Calu3 (cell line): ENCODE measurements at regions of chr16 and their contacts with region 1.

Region 1: GRCh38 chr16:30091474-30092372 is at the start of gene TBX6:
- DNase-seq: peak; percentile 98
- H3K4me3 Mint-ChIP-seq: peak within 1 kb of the TSS; percentile 85
- H3K27ac Mint-ChIP-seq: peak within 1 kb of the TSS; percentile 94
- H3K4me1 Mint-ChIP-seq: peaks cover 59% of the 10 kb centered on the region
- H3K27me3 Mint-ChIP-seq: no peaks in the 10 kb centered on the region
- CTCF ChIP-seq: peak; percentile 93
- total RNA-seq, gene TBX6: 3.6 and 4.7 TPM in 2 replicates

Region 2: GRCh38 chr16:30065143-30065850 is 26.4 kb before region 1 on chr16 and contains the start of gene ALDOA:
- CTCF ChIA-PET with region 1: interaction called, 20 read pairs
- intact Hi-C with region 1: no loop called
- DNase-seq: peak; percentile 100
- H3K4me3 Mint-ChIP-seq: peak within 1 kb of the TSS; percentile 83
- H3K27ac Mint-ChIP-seq: peak within 1 kb of the TSS; percentile 87
- H3K4me1 Mint-ChIP-seq: peaks cover 47% of the 10 kb centered on the region
- H3K27me3 Mint-ChIP-seq: no peaks in the 10 kb centered on the region
- CTCF ChIP-seq: no peak
- total RNA-seq, gene ALDOA: 1,549 and 1,562 TPM in 2 replicates

Region 3: GRCh38 chr16:30104494-30104968 is 12.8 kb after region 1 on chr16:
- CTCF ChIA-PET with region 1: interaction called, 10 read pairs
- intact Hi-C with region 1: no loop called
- DNase-seq: peak; percentile 85
- H3K4me3 Mint-ChIP-seq: peak overlapping the region; percentile 35
- H3K27ac Mint-ChIP-seq: peak overlapping the region; percentile 52
- H3K4me1 Mint-ChIP-seq: peaks cover 19% of the 10 kb centered on the region
- H3K27me3 Mint-ChIP-seq: no peaks in the 10 kb centered on the region
- CTCF ChIP-seq: no peak

Region 4: DNA sequence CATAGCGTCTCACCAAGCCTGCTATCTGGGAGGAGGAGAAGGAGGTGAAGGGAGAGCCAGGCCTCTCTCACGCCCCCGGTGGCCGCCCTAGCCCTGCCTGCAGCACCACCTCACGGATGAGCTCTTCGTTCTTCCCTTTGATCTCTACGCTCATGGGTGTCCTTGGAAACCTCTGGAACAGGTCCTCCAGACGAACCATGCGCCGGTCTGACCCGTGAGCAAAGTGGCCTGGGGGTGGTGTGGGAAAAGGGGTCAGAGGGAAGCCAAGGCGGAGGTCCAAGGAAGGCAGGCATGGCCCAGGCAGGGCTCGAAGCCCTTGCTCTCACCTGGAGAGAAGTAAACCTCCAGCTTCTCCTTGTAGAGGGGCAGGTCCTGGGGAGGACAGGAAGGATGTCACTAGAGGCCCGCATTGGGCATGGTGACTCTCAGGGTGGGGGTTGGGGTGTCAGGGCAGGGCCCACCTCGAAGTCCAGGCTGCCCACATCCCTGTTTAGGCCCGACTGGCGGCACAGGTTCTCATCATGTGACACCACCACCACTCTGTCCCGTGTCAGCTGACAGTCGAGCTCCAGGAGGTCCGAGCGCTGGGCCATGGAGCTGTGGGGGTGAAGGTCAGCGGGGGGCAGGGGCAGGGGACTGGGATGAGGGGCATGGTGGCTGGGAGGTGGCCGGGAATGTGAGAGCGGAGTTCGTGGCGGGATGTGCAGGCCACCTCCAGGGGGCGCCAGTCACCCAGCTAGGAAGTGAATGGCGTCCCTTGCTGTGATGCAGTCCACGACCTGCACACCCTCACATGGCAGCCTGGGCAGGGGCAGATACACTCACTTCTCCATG is 20.7 kb after region 1 on chr16:
- CTCF ChIA-PET with region 1: interaction called, 12 read pairs
- intact Hi-C with region 1: no loop called
- DNase-seq: peak; percentile 75
- H3K4me3 Mint-ChIP-seq: peak overlapping the region; percentile 34
- H3K27ac Mint-ChIP-seq: peak overlapping the region; percentile 64
- H3K4me1 Mint-ChIP-seq: peaks cover 32% of the 10 kb centered on the region
- H3K27me3 Mint-ChIP-seq: no peaks in the 10 kb centered on the region
- CTCF ChIP-seq: peak; percentile 92